ENCODE measurements at regions of chr1 and their contacts with region 1.

Region 1: GRCh38 chr1:12434174-12434573 is 183.8 kb downstream of the DHRS3 start:
- DNase-seq: peak; percentile 82
- ATAC-seq: peak; percentile 48
- H3K4me3 Mint-ChIP-seq: no peak overlapping the region
- H3K27ac Mint-ChIP-seq: peak overlapping the region; percentile 14
- H3K4me1 Mint-ChIP-seq: peaks cover 63% of the 10 kb centered on the region
- H3K27me3 Mint-ChIP-seq: no peaks in the 10 kb centered on the region

Region 2: DNA sequence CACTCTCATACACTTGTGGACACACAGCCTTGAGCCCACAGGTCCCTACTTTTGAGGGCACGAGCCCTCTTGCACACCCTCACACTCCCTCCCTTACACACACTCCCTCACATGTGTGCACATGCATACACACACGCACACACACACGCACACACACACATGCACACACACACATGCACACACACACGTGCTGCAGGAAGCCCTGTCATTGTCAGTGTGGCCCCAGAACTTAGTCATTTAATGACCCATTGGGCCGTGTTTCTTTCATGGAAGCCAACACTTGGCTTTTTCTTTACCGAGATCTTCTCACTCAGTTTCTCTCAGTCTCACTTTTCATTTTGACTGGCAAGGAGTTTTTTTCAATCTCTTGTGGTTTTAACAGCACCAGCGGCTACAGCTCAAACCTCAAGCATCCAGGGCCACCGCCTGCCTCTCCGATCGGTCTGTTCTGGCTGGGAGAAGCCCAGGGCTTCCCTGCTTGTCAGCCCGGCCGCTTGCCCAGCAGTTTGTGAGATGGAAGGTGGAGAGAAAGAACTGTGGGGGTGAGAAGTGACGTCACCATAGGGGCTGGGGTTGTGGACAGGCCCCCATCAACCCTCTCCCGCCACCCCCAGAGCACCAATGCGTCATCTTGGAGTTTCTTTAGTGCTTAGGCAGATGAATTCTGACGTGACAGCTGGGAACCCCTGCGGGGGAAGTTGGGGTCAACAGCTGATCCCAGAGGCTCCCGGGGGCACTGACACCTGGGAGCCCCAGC is 386.9 kb before region 1 on chr1:
- CTCF ChIA-PET with region 1: no interaction called
- POLR2A ChIA-PET with region 1: no interaction called
- intact Hi-C with region 1: loop called in 1 of 2 experiments (anchors 5 kb)
- DNase-seq: peak; percentile 86
- ATAC-seq: peak; percentile 79
- H3K4me3 Mint-ChIP-seq: no peak overlapping the region
- H3K27ac Mint-ChIP-seq: no peak overlapping the region
- H3K4me1 Mint-ChIP-seq: peaks cover 22% of the 10 kb centered on the region
- H3K27me3 Mint-ChIP-seq: peaks cover 6% of the 10 kb centered on the region

Region 3: DNA sequence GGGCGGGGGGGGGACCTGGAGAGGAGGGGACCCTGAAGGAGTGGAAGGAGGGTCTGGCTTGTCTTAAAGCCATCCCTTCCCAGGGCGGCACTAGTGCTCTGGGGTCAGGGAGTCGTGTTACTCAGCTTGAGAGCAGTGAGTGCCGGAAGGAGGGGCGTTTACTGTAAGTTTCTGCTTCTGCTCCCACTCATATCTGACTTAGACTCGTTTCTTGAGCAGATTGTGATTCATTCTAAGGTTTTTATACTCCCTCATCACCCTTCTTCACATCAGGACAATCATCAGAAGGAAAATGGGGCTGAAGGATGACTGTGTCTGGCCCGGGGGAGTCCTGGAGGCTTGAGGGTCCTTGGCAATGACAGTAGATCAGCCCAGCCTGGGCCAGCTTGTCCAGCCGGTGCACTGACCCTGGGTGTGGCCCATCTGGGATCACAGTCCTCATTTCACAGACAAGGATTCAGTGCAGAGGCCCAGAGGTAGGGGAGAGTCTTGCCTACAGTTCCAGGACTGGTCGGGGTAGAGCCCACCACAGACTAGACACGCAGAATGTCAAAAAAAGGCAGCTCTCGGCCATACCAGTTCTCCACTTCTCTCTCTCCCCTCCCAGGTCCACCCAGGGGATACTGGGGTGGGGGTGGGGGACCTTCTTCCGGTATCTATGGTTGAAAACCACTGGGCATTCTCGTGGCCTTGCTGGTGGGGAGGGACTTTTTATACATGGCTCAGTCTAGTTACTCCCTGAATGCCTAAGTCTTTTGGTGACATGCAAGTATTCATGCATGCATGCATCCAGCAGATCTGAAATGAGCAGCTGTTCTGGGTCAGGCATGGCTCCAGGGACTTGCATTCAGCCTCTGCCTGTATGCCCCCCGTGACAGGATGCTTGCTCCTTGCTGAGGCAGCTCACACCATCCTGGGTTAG is 366.0 kb before region 1 on chr1:
- CTCF ChIA-PET with region 1: no interaction called
- POLR2A ChIA-PET with region 1: no interaction called
- intact Hi-C with region 1: no loop called
- DNase-seq: peak; percentile 87
- ATAC-seq: peak; percentile 80
- H3K4me3 Mint-ChIP-seq: peak overlapping the region; percentile 62
- H3K27ac Mint-ChIP-seq: peak overlapping the region; percentile 95
- H3K4me1 Mint-ChIP-seq: peaks cover 57% of the 10 kb centered on the region
- H3K27me3 Mint-ChIP-seq: peaks cover 35% of the 10 kb centered on the region

Region 4: DNA sequence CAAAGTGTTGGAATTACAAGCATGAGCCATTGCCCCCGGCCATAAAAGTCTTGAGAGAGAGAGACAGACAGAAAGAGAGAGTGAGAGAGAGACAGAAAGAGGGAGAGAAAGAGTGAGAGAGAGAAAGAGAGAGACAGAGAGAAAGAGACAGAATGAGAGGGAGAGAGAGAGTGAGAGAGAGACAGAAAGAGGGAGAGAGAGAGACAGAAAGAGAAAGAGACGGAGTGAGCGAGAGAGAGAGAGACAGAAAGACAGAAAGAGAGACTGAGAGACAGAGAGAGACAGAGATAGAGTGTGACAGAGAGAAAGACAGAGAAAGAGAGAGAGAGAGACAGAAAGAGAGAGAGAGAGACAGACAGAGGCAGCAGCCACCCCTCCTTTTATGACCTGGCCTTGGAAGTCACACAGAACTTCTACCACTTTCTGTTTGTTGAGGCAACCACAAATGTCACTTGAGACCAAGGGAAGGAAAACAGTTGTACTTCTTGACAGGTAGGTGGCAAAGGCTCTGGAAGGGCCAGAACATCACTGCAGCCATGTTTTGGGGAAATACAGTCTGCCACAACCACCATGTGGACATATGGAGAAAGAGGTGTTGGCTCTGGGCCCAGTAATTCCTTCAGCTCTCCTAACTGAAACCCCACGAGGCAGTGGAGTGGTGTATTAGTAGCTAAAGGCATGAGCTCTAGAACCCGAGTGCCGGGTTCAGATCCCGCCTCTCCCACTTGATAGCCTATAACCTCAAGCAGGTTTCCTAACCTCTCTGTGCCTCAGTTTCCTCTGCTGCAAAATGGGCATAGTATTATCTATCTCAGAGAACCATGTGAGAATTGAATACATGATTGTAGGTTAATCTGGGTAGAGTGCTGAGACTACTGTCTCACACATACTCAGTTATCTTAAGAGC is 320.5 kb before region 1 on chr1:
- CTCF ChIA-PET with region 1: no interaction called
- POLR2A ChIA-PET with region 1: no interaction called
- intact Hi-C with region 1: no loop called
- DNase-seq: no peak
- ATAC-seq: peak; percentile 28
- H3K4me3 Mint-ChIP-seq: no peak overlapping the region
- H3K27ac Mint-ChIP-seq: no peak overlapping the region
- H3K4me1 Mint-ChIP-seq: peaks cover 5% of the 10 kb centered on the region
- H3K27me3 Mint-ChIP-seq: no peaks in the 10 kb centered on the region

Region 5: GRCh38 chr1:12384836-12385456 is 49.2 kb before region 1 on chr1:
- CTCF ChIA-PET with region 1: interaction called, 4 read pairs
- POLR2A ChIA-PET with region 1: no interaction called
- intact Hi-C with region 1: loop called in 1 of 2 experiments (anchors 2 kb)
- DNase-seq: peak; percentile 35
- ATAC-seq: peak; percentile 75
- H3K4me3 Mint-ChIP-seq: no peak overlapping the region
- H3K27ac Mint-ChIP-seq: no peak overlapping the region
- H3K4me1 Mint-ChIP-seq: peaks cover 42% of the 10 kb centered on the region
- H3K27me3 Mint-ChIP-seq: no peaks in the 10 kb centered on the region

Region 6: GRCh38 chr1:12448746-12449177 is 14.6 kb after region 1 on chr1:
- CTCF ChIA-PET with region 1: interaction called, 8 read pairs
- POLR2A ChIA-PET with region 1: interaction called, 4 read pairs
- intact Hi-C with region 1: loop called (anchors 1 kb)
- DNase-seq: no peak
- ATAC-seq: no peak
- H3K4me3 Mint-ChIP-seq: peak overlapping the region; percentile 24
- H3K27ac Mint-ChIP-seq: peak overlapping the region; percentile 76
- H3K4me1 Mint-ChIP-seq: peaks cover 69% of the 10 kb centered on the region
- H3K27me3 Mint-ChIP-seq: peaks cover 10% of the 10 kb centered on the region

Region 7: GRCh38 chr1:12501661-12502060 is 67.5 kb after region 1 on chr1:
- CTCF ChIA-PET with region 1: interaction called, 3 read pairs
- POLR2A ChIA-PET with region 1: no interaction called
- intact Hi-C with region 1: loop called in 1 of 2 experiments (anchors 2 kb)
- DNase-seq: no peak
- ATAC-seq: no peak
- H3K4me3 Mint-ChIP-seq: no peak overlapping the region
- H3K27ac Mint-ChIP-seq: peak overlapping the region; percentile 68
- H3K4me1 Mint-ChIP-seq: peaks cover 45% of the 10 kb centered on the region
- H3K27me3 Mint-ChIP-seq: no peaks in the 10 kb centered on the region

Region 8: GRCh38 chr1:12604114-12604874 is 170.1 kb after region 1 on chr1:
- CTCF ChIA-PET with region 1: interaction called, 5 read pairs
- POLR2A ChIA-PET with region 1: interaction called, 4 read pairs
- intact Hi-C with region 1: loop called (anchors 1 kb)
- DNase-seq: peak; percentile 85
- ATAC-seq: peak; percentile 97
- H3K4me3 Mint-ChIP-seq: peak overlapping the region; percentile 21
- H3K27ac Mint-ChIP-seq: peak overlapping the region; percentile 74
- H3K4me1 Mint-ChIP-seq: peaks cover 49% of the 10 kb centered on the region
- H3K27me3 Mint-ChIP-seq: no peaks in the 10 kb centered on the region